ENCODE measurements at regions of chr18 and their contacts with region 1.

Region 1: DNA sequence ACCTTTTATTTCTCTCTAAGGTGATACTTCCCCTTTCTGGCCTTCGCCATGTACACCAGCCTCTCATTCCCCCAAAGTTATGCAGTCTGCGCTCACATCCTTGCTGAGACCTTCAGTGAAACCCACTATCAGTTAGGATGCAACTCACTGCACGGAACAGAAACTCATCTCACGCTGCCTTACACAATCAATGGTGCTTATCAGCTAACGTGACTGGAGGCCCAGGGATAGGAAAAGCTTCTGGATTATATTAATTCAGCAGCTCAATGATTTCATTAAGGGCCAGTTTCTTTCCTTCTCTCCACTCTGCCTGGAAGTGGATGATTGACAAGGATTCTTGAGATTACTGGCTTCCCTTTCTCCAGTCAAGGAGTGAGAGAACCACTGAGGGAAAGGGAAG is 44.8 kb downstream of the CDH2 start:
- DNase-seq: no peak

Region 2: DNA sequence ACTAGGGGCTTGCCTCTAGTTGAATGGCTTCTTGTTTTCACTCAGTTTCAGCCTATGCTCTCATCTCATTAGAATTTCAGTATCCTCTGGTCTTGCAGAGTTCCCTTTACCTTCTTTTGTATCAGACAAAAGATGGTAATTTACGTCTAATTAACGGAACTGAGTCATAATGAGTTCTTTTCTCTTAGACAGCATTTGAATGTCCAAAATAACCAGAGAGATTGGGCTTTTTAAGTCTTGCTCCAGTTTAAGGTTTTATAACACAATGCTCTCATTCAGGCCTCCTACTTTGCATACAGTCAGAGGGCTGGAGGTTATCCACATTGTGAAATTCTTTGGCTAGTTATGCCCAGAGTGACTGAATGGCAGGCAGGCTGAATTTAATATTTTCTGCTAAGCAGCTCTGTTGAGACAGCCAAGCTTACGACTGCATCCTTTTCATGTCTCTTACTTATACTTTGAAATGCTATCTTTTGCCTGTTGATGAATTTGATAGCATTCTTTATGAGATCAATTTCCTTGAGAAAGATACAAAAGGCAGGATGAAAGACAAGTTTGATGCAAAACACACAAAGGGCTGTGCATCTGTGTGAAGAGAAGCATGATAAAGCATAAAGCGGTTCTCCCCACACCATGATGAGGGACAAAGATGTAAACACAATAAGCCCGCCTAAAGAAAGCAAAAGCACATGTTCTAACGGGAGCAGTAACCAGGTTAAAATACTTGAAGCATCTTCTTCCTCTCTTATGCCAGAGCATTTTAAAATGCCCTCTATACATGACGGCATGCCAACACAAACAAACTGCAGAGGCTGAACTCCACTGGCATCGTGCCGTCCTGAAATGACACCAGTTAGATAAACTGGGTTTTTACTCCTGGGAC is 45.2 kb before region 1 on chr18:
- intact Hi-C with region 1: loop called in 1 of 2 experiments (anchors 2 kb)
- DNase-seq: no peak

Region 3: GRCh38 chr18:28313602-28314001 is 181.5 kb after region 1 on chr18:
- intact Hi-C with region 1: no loop called
- DNase-seq: no peak